A673 (cell line): ENCODE measurements at regions of chr7 and their contacts with region 1.

Region 1: DNA sequence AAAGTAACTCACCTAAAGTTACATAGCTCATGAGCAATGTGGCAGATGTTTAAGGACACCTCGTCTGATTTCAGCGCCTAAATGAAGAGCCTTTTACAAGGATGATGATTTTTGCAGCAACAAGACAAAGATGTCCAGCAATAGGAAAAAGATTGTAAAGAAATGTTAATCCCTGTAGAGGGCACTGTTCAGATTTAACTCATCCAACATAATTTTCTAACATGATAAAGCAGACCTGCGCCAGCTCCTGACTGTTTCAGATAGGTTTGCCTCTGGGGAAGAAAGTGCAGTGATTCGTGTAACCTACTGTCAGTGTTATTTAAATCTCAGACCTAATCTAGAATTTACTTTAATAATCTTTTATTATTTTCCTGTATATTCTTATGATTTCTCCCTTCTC is 595.2 kb downstream of the AUTS2 start:
- DNase-seq: peak; percentile 39
- H3K4me3 ChIP-seq: no peak overlapping the region
- H3K27ac ChIP-seq: no peak overlapping the region
- H3K4me1 ChIP-seq: peaks cover 7% of the 10 kb centered on the region
- H3K27me3 ChIP-seq: no peaks in the 10 kb centered on the region
- CTCF ChIP-seq: peak; percentile 55

Region 2: GRCh38 chr7:69922026-69922803 is 271.3 kb before region 1 on chr7:
- CTCF ChIA-PET with region 1: no interaction called
- POLR2A ChIA-PET with region 1: no interaction called
- intact Hi-C with region 1: no loop called
- DNase-seq: no peak
- H3K4me3 ChIP-seq: no peak overlapping the region
- H3K27ac ChIP-seq: no peak overlapping the region
- H3K4me1 ChIP-seq: no peaks in the 10 kb centered on the region
- H3K27me3 ChIP-seq: no peaks in the 10 kb centered on the region
- CTCF ChIP-seq: no peak

Region 3: GRCh38 chr7:70177166-70177565 is 16.3 kb before region 1 on chr7:
- CTCF ChIA-PET with region 1: no interaction called
- POLR2A ChIA-PET with region 1: no interaction called
- intact Hi-C with region 1: no loop called
- DNase-seq: no peak
- H3K4me3 ChIP-seq: no peak overlapping the region
- H3K27ac ChIP-seq: no peak overlapping the region
- H3K4me1 ChIP-seq: no peaks in the 10 kb centered on the region
- H3K27me3 ChIP-seq: no peaks in the 10 kb centered on the region
- CTCF ChIP-seq: no peak

Region 4: GRCh38 chr7:70506434-70506833 is 312.9 kb after region 1 on chr7:
- CTCF ChIA-PET with region 1: no interaction called
- POLR2A ChIA-PET with region 1: no interaction called
- intact Hi-C with region 1: loop called (anchors 10 kb)
- DNase-seq: peak; percentile 19
- H3K4me3 ChIP-seq: no peak overlapping the region
- H3K27ac ChIP-seq: no peak overlapping the region
- H3K4me1 ChIP-seq: no peaks in the 10 kb centered on the region
- H3K27me3 ChIP-seq: no peaks in the 10 kb centered on the region
- CTCF ChIP-seq: peak; percentile 19; the same call in 1 of the 2 replicates